ENCODE measurements at regions of chr9 and their contacts with region 1.

Region 1: DNA sequence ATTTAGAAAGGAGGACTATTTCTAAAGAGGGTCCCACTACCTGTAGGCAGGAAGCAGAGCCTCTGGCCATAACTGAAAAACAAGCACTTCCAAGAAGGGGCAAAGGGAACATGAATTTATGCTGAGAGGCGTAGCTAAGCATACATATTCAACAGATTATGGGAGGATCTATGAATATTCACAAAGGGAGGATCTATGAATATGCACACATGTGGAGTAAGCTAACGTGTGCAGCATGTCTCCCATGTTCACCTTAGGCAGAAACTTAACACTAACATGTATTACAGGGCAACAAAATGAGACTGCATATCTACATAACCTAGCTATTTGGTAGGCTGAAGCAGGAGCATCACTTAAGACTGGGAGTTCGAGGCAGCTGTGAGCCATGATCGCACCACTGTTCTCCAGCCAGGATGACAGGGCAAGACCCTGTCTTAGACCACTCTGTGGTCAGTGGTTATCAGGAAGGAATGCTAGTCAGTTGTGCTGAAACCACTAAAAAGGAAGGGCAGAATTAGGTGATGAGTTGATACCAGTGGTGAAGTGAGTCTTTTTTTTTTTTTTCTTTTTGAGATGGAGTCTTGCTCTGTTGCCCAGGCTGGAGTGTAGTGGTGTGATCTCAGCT is 20.8 kb downstream of the FXN start:
- DNase-seq: no peak
- H3K4me3 ChIP-seq: no peak overlapping the region
- H3K27ac ChIP-seq: no peak overlapping the region
- H3K4me1 ChIP-seq: peaks cover 0 to 7% (median 2%) of the 10 kb centered on the region in 4 experiments; a peak in 4 of 7 replicates
- H3K27me3 ChIP-seq: no peaks in the 10 kb centered on the region
- CTCF ChIP-seq: no peak
- EP300 ChIP-seq: no peak
- POLR2A ChIP-seq: no peak
- RAD21 ChIP-seq: no peak

Region 2: DNA sequence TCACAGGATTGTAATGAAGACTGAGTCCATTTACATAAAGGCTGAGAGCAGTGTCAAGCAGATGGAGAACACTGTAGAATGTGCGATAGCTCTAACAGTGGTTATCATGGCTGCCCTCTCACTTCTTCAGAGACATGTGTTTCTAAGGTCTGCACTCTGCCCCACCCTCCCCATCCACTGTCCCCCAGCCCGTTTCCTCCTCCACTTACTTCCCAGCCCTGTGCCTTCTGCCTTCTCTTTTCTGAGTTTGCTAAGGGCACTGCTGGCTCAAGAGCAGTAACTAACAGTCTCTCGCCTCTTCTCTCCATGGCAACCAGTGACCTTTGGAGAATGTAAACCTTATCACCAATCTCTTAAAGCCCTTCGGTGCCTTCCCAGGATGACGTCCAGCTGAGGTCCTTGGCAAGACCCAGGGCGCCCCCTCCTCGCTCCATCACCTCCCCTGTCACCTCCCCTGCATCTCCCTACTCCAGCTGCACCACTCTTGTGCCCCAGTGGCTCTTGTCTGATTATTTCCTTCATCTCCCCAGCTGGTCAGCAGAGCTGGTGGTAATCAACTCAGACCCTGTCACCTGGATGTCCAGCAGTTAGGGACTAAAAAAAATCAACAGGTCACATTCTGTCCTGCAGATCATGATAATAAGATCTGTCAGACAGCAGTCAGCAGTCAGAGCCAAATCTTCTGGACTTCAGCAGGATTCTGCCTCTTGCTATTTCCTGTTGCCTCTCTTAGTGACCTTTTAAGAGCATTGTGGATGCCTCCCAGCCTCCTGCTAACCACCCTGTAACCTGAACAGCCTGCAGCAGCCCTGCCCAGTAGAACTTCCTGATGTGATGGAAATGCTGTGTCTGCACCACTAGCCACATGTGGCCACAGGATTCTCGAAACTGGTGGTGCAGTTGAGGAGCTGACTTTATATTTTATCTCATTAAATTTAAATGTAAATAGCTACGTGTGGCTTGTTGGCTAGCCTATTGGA is 11.8 kb before region 1 on chr9:
- CTCF ChIA-PET with region 1: interaction called, 27 read pairs
- POLR2A ChIA-PET with region 1: interaction called, 4 read pairs
- DNase-seq: no peak
- H3K4me3 ChIP-seq: no peak overlapping the region
- H3K27ac ChIP-seq: no peak overlapping the region
- H3K4me1 ChIP-seq: peaks cover 9 to 22% (median 14%) of the 10 kb centered on the region in 4 experiments
- H3K27me3 ChIP-seq: no peaks in the 10 kb centered on the region
- CTCF ChIP-seq: no peak
- EP300 ChIP-seq: no peak
- POLR2A ChIP-seq: no peak
- RAD21 ChIP-seq: no peak

Region 3: DNA sequence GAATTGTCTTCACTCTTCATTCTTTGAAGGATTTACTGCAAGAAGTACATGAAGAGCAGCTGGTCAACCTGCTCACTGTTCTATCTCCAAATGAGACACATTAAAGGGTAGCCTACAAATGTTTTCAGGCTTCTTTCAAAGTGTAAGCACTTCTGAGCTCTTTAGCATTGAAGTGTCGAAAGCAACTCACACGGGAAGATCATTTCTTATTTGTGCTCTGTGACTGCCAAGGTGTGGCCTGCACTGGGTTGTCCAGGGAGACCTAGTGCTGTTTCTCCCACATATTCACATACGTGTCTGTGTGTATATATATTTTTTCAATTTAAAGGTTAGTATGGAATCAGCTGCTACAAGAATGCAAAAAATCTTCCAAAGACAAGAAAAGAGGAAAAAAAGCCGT is 16.8 kb after region 1 on chr9:
- CTCF ChIA-PET with region 1: interaction called, 13 read pairs
- POLR2A ChIA-PET with region 1: no interaction called
- DNase-seq: no peak
- H3K4me3 ChIP-seq: no peak overlapping the region
- H3K27ac ChIP-seq: no peak overlapping the region
- H3K4me1 ChIP-seq: no peaks in the 10 kb centered on the region
- H3K27me3 ChIP-seq: no peaks in the 10 kb centered on the region
- CTCF ChIP-seq: no peak
- EP300 ChIP-seq: no peak
- POLR2A ChIP-seq: no peak
- RAD21 ChIP-seq: no peak

Region 4: DNA sequence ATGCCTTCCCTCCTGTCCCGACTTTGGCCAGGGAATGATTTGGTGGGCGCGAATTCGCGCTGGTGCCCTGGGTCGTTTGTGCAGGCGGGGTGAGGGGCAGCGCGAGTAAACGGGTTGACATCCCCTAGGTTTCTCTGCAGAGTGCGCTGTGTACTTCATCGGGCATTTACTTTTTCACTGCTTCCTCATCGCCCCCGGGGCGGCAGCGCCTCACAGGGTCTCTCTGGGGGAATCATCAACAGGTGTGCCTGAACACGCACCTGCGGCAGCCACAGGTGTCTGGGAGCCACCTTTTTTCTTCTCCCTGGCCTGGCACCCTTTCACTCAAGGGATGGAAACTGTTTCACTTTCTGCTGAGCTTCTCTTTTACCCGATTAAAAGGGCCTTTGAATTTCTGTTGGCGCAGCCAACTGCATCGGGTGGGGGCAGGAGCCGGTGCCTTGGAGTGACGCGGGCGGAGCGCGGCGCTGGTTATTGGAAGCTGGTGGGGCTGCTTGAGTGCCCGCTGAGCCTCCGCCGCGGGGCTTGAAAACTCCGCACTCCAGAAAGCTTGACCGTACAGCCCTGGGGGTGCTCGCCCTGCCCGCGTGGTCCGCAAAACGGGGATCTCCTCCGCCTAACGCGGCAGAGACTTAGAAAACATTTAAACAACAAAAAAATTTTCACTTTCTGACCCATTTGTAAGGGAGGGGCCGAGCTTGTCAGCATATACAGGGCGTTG is 65.7 kb after region 1 on chr9:
- CTCF ChIA-PET with region 1: interaction called, 6 read pairs
- POLR2A ChIA-PET with region 1: interaction called, 32 read pairs
- DNase-seq: peak in 1 of 2 experiments; percentile 68
- H3K4me3 ChIP-seq: peak overlapping the region; percentile 85 to 91 (median 88)
- H3K27ac ChIP-seq: peak overlapping the region; percentile 96
- H3K4me1 ChIP-seq: peaks cover 6 to 8% (median 7%) of the 10 kb centered on the region in 4 experiments
- H3K27me3 ChIP-seq: no peaks in the 10 kb centered on the region
- CTCF ChIP-seq: peak in 2 of 3 experiments; percentile 1 to 3; a peak in 1 of 4 replicates
- EP300 ChIP-seq: no peak
- POLR2A ChIP-seq: 0 out of 3 replicates have a peak, but pooled peaks of 1 of the 2 experiments have one; percentile 12
- RAD21 ChIP-seq: 0 out of 4 replicates have a peak, but pooled peaks of 1 of the 2 experiments have one; percentile 6

Region 5: GRCh38 chr9:69243116-69243515 is 186.8 kb after region 1 on chr9:
- CTCF ChIA-PET with region 1: interaction called, 12 read pairs
- POLR2A ChIA-PET with region 1: no interaction called
- DNase-seq: no peak
- H3K4me3 ChIP-seq: no peak overlapping the region
- H3K27ac ChIP-seq: no peak overlapping the region
- H3K4me1 ChIP-seq: no peaks in the 10 kb centered on the region
- H3K27me3 ChIP-seq: no peaks in the 10 kb centered on the region
- CTCF ChIP-seq: no peak
- EP300 ChIP-seq: no peak
- POLR2A ChIP-seq: no peak
- RAD21 ChIP-seq: no peak

Measured in H1 (cell line).